Activated naive CD4-positive, alpha-beta T cell treated with anti-CD3 and anti-CD28 coated beads for 36 hours (primary cell): ENCODE measurements at regions of chr11 and their contacts with region 1.

Region 1: GRCh38 chr11:34051349-34052035 is at the start of gene CAPRIN1:
- DNase-seq: peak; percentile 86
- H3K4me3 Mint-ChIP-seq: peak within 1 kb of the TSS; percentile 96
- H3K27ac Mint-ChIP-seq: peak within 1 kb of the TSS; percentile 97
- H3K4me1 Mint-ChIP-seq: peaks cover 14% of the 10 kb centered on the region
- H3K27me3 Mint-ChIP-seq: no peaks in the 10 kb centered on the region
- total RNA-seq, gene CAPRIN1: 274 to 289 TPM

Region 2: DNA sequence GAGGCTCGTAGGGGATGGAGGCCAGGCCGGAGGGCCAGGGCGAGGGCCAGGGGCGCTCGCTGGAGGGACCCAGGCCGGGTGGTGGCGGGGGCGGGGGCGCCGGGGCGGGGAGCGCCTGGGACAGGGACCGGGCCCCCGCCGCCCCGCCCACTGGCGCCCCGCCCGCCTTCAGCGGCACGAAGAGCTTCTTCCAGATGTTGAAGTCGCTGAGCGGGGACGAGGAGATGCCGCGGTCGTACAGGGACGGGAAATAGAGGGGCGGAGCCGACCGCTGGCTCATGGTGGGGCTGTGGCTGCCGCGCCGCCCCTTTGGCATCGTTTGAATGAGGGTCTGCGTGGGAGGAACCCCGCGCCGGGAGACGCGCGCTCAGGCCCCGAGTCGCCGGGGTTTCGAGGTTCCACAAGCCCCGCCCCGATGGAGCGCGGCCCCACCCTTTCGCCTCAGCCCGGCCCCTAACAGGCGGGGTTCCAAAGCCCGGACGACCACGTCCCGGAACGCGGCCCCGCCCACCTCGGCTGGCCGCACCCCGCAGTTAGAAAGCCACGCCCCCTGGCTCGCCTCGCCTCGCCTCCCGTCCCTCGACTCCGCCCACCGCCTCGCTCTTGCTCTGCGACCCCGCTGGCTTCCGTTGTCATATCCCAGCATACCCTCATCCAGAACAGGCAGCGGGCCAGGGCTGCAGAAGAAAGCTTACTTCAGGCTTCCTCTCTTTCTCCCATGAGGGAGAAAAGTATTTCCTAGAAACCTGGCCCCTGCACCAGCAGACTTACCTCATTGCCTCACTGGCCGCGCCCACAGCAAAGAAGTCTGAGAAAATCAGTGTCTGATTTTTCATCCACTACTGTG is 350.8 kb before region 1 on chr11 and contains the start of gene C11orf91:
- CTCF ChIA-PET with region 1: no interaction called
- intact Hi-C with region 1: loop called (anchors 10 kb)
- DNase-seq: peak; percentile 94
- H3K4me3 Mint-ChIP-seq: peak within 1 kb of the TSS; percentile 85
- H3K27ac Mint-ChIP-seq: peak within 1 kb of the TSS; percentile 61
- H3K4me1 Mint-ChIP-seq: peaks cover 7% of the 10 kb centered on the region
- H3K27me3 Mint-ChIP-seq: peaks cover 8% of the 10 kb centered on the region
- total RNA-seq, gene C11orf91: not detected

Region 3: GRCh38 chr11:33773987-33774735 is 277.3 kb before region 1 on chr11 and contains the start of gene FBXO3:
- CTCF ChIA-PET with region 1: no interaction called
- intact Hi-C with region 1: loop called (anchors 1 kb)
- DNase-seq: peak; percentile 82
- H3K4me3 Mint-ChIP-seq: peak within 1 kb of the TSS; percentile 90
- H3K27ac Mint-ChIP-seq: peak within 1 kb of the TSS; percentile 85
- H3K4me1 Mint-ChIP-seq: peaks cover 40% of the 10 kb centered on the region
- H3K27me3 Mint-ChIP-seq: peaks cover 12% of the 10 kb centered on the region
- total RNA-seq, gene FBXO3: 12.2 to 12.9 TPM

Region 4: DNA sequence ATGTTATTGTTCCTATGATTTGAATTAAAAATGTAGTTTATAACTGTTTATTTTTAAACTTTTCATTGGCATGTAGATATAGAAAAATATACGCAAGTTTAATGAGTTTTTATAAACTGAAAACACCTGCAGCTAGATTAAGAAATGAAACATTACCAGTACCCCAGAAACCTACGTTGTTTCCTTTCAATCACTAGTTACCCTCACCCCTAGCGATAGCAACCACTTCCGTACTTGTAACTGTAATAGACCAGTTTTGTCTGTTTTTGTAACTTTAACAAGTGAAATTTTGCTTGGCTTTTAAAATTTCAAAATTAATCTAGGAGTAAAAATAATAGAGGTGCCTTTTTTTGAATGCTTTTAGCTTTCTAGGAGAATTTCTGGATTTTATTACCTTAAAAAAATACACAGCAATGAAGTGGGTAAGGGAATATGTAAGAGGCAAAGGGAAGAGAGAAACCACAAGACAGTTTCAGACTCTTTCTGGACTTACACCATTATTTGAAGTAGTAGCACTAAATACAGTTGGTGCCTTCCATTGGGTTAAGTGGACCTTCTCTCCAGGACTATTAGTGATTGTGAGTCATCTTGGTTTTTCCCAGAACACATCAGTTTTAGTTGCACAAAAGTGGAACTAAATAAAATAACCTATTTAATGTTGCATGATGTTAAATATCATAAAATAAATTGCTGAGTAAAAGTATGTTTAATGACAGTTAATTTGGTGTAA is 35.2 kb after region 1 on chr11:
- CTCF ChIA-PET with region 1: no interaction called
- intact Hi-C with region 1: loop called (anchors 5 kb)
- DNase-seq: no peak
- H3K4me3 Mint-ChIP-seq: no peak overlapping the region
- H3K27ac Mint-ChIP-seq: peak overlapping the region; percentile 78
- H3K4me1 Mint-ChIP-seq: peaks cover 20% of the 10 kb centered on the region
- H3K27me3 Mint-ChIP-seq: no peaks in the 10 kb centered on the region

Region 5: GRCh38 chr11:34105079-34105956 is 53.8 kb after region 1 on chr11 and contains the start of gene NAT10:
- CTCF ChIA-PET with region 1: interaction called, 4 read pairs
- intact Hi-C with region 1: loop called (anchors 1 kb)
- DNase-seq: peak; percentile 98
- H3K4me3 Mint-ChIP-seq: peak within 1 kb of the TSS; percentile 94
- H3K27ac Mint-ChIP-seq: peak within 1 kb of the TSS; percentile 94
- H3K4me1 Mint-ChIP-seq: peaks cover 51% of the 10 kb centered on the region
- H3K27me3 Mint-ChIP-seq: no peaks in the 10 kb centered on the region
- total RNA-seq, gene NAT10: 91.0 to 93.3 TPM